ENCODE measurements at regions of chr1 and their contacts with region 1.

Region 1: DNA sequence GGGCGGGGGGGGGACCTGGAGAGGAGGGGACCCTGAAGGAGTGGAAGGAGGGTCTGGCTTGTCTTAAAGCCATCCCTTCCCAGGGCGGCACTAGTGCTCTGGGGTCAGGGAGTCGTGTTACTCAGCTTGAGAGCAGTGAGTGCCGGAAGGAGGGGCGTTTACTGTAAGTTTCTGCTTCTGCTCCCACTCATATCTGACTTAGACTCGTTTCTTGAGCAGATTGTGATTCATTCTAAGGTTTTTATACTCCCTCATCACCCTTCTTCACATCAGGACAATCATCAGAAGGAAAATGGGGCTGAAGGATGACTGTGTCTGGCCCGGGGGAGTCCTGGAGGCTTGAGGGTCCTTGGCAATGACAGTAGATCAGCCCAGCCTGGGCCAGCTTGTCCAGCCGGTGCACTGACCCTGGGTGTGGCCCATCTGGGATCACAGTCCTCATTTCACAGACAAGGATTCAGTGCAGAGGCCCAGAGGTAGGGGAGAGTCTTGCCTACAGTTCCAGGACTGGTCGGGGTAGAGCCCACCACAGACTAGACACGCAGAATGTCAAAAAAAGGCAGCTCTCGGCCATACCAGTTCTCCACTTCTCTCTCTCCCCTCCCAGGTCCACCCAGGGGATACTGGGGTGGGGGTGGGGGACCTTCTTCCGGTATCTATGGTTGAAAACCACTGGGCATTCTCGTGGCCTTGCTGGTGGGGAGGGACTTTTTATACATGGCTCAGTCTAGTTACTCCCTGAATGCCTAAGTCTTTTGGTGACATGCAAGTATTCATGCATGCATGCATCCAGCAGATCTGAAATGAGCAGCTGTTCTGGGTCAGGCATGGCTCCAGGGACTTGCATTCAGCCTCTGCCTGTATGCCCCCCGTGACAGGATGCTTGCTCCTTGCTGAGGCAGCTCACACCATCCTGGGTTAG is 5.1 kb downstream of the TNFRSF8 start:
- DNase-seq: peak; percentile 81
- H3K4me3 Mint-ChIP-seq: peak overlapping the region; percentile 71
- H3K27ac Mint-ChIP-seq: peak overlapping the region; percentile 94
- H3K4me1 Mint-ChIP-seq: peaks cover 55% of the 10 kb centered on the region
- H3K27me3 Mint-ChIP-seq: peaks cover 4% of the 10 kb centered on the region

Region 2: DNA sequence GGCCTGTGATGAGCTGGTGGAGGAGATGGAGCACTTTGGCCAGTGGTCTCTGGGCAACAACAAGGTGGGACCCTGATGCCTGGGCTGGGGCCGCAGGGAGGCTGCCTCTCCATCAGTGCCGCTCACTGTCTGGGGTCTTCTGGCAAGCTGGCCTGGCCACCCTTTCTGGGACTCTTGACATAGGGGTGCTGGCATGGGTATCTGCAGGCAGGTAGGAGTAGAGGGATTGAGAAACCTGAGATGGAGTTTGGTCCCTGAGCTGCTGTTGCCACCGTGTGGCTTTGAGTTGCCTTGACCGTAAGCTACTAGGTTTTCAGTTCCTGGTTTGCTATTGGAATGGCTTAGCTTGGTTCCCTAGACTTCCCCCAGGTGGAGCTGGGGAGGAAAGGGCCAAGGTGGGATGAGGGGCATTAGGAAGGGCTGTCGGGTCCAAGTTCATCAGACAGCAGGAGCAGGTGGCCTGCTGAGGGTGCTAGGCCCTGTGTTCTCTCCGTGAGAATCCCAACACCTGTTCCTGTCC is 101.1 kb before region 1 on chr1:
- intact Hi-C with region 1: no loop called
- DNase-seq: peak; percentile 66
- H3K4me3 Mint-ChIP-seq: no peak overlapping the region
- H3K27ac Mint-ChIP-seq: no peak overlapping the region
- H3K4me1 Mint-ChIP-seq: peaks cover 8% of the 10 kb centered on the region
- H3K27me3 Mint-ChIP-seq: no peaks in the 10 kb centered on the region

Region 3: DNA sequence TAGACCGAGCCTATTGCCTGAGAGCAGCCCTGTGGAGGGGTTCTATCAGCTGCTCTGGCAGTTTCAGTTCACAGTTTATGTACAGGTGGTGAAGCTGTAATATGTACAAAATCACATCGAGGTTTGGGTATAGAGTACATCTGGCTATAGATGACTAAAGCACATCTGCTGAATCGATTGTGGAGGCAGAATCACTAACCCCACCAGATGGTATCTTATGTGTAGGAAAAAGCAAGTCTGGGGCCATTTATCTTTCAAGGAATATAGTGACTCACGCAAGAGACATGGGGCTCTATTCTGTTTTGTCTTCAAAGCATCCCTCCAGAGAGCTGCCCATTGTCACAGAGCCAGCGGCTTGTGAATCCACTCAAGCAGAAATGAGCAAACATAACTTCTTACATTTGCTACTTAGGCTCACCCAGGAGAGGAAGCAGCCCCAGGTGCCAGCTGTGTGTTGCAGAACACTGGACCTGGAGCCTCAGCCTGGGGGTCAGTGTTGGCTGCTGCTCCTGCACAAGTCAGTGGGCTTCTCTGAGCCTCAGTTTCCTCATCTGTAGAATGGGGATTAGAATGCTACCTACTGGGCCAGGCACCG is 27.6 kb before region 1 on chr1:
- intact Hi-C with region 1: loop called (anchors 1 kb)
- DNase-seq: no peak
- H3K4me3 Mint-ChIP-seq: no peak overlapping the region
- H3K27ac Mint-ChIP-seq: peak overlapping the region; percentile 29
- H3K4me1 Mint-ChIP-seq: peaks cover 26% of the 10 kb centered on the region
- H3K27me3 Mint-ChIP-seq: peaks cover 3% of the 10 kb centered on the region

Region 4: GRCh38 chr1:12057382-12057781 is 10.8 kb before region 1 on chr1:
- intact Hi-C with region 1: loop called (anchors 1 kb)
- DNase-seq: peak; percentile 72
- H3K4me3 Mint-ChIP-seq: peak overlapping the region; percentile 44
- H3K27ac Mint-ChIP-seq: peak overlapping the region; percentile 17
- H3K4me1 Mint-ChIP-seq: peaks cover 61% of the 10 kb centered on the region
- H3K27me3 Mint-ChIP-seq: no peaks in the 10 kb centered on the region

Region 5: GRCh38 chr1:12087797-12088314 is 19.7 kb after region 1 on chr1:
- intact Hi-C with region 1: loop called (anchors 2 kb)
- DNase-seq: peak; percentile 90
- H3K4me3 Mint-ChIP-seq: peak overlapping the region; percentile 70
- H3K27ac Mint-ChIP-seq: peak overlapping the region; percentile 92
- H3K4me1 Mint-ChIP-seq: peaks cover 50% of the 10 kb centered on the region
- H3K27me3 Mint-ChIP-seq: no peaks in the 10 kb centered on the region

Region 6: DNA sequence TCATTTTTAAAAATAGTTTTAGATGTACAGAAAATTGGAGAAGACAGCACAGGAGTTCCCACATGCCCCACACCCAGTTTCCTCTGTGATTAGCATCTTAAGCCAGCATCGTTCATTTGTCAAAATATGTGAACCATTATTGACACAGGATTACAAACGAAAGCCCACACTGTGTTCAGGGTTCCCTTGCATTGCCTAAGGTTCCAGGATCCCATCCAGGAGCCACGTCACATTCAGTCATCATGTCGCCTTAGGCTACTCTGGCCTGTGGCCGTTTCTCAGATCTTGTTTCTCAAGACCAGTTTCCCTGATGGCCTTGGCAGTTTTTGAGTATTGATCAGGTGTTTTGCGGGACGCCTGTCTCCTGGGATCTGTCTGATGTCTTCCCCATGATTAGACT is 63.9 kb after region 1 on chr1:
- intact Hi-C with region 1: no loop called
- DNase-seq: no peak
- H3K4me3 Mint-ChIP-seq: no peak overlapping the region
- H3K27ac Mint-ChIP-seq: no peak overlapping the region
- H3K4me1 Mint-ChIP-seq: peaks cover 24% of the 10 kb centered on the region
- H3K27me3 Mint-ChIP-seq: no peaks in the 10 kb centered on the region

Region 7: DNA sequence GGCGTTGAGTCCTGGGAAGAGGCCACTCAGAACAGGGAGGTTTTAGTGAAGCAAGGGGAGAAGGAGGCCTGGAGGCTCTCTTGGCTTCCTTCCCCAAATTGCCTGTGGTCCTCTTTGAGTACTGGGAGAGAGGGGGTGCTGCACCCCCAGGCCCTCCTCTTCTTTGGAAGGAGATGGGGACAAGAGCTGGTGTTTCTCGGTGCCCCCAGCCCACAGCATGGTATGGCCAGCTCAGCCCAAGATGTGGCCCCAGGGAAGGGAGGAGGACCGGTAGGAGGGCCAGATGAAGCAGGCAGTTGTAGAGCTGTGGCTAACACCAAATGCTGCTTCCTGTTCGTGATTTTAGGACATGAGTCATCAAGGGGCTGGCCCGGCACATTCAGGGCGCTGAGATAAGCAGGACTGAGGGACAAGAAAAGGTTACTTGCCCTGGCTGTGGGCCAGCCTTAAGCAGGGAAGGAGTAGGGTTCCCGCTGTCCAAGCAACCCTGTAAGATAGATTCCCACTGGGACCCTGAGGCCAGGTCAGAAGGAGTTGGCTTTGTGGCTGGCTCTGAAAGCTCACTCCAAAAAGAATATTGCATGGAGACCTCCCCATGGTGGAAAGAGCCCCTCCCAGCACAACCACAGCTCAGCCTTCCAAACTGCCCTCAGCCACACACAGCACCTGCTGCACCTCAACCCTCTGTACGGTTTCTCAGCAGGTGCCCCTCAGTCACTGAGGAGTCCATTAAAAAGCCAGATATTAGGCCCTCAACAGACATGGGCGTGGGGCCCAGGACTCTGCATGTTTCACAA is 93.7 kb after region 1 on chr1:
- intact Hi-C with region 1: loop called (anchors 5 kb)
- DNase-seq: peak; percentile 93
- H3K4me3 Mint-ChIP-seq: peak overlapping the region; percentile 76
- H3K27ac Mint-ChIP-seq: peak overlapping the region; percentile 95
- H3K4me1 Mint-ChIP-seq: peaks cover 77% of the 10 kb centered on the region
- H3K27me3 Mint-ChIP-seq: no peaks in the 10 kb centered on the region